ENCODE measurements at regions of chr3 and their contacts with region 1.

Region 1: DNA sequence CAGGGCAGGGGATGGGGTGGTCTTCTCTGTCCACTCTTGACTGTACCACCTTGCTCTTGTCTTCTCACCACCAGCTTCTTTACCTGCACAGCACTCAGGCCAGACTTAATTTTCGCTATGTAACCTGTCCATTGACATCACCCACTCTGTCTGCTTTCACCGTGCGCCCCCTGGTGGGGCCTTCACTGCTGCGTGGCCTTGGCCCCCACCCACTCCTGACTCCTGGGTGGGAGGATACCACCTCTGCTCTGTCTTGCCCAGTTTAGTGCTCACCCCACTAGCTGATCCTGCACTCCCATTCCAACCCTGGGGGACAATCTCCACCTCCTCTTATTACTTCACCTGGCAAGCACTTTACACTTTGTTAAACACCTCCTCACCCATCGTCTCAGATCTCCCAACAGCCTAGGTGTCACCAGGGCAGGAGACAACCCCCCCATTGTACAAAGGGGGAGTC is 17.7 kb downstream of the PTH1R start:
- DNase-seq: no peak
- H3K4me3 ChIP-seq: no peak overlapping the region
- CTCF ChIP-seq: peak; percentile 88

Region 2: DNA sequence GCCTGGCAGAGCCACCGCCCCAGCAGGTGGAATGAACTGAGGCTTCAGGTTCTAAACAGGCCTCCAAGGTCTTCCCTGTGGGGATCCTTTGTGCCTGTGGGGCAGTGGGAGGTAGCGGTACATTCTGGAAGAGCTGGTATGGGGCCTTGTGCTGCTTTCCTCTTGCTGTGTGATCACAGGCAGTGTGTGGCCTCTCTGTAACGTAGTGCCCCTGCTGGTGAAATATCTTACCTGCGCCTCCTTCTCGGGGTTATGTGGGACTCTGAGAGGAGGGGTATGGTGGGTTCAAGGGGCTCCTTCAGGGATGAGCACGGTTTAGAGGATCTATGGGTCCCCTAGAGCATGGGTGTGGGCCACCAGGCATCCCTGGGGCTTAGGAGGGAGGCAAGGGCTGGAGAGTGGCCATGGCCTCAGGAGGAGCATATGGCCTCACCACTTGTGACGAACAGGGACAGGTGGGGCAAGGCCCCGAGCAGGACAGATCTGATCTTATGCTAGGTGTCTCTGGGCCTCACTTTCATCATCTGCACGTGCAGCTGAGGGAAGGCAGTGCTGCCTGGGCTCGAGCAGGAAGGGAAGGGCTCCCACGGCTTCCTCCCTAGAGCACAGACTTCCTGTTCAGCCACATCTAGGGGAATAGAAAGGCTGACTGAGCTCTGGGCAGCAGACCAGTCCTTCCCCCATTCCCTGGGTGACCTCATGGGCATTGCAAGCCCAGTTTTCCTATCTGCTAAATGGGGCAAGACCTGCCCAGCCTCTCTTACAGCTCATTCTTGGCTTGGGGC is 199.9 kb before region 1 on chr3:
- CTCF ChIA-PET with region 1: interaction called, 59 read pairs
- POLR2A ChIA-PET with region 1: no interaction called
- DNase-seq: no peak
- H3K4me3 ChIP-seq: no peak overlapping the region
- CTCF ChIP-seq: no peak

Region 3: DNA sequence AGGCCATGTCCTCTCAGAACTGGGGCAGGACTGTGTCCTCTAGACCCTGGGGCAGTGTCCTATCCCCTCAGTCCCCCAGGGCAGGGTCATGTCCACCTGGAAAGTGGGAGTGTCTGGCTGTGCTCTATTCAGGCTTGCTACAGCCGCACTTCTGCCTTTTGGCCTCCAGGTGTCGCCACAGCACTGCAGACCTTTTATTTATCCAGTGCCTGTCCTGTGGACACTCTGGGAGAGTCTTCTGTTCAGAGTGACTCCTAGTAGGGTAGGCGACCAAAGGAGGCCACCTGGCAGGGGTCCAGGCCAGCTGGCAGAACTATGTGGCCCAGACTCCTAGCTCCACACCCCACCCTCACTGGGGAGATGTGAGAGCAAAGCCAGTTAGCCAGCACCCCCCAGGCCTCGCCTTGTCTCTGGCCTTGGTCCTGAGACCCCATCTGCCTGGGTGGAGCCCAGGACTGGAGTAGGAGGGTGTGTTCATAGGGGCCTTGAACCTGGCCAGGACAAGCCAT is 190.2 kb before region 1 on chr3:
- CTCF ChIA-PET with region 1: interaction called, 161 read pairs
- POLR2A ChIA-PET with region 1: no interaction called
- DNase-seq: no peak
- H3K4me3 ChIP-seq: no peak overlapping the region
- CTCF ChIP-seq: peak; percentile 93

Region 4: GRCh38 chr3:46717447-46718231 is 177.6 kb before region 1 on chr3 and contains the start of gene PRSS50:
- CTCF ChIA-PET with region 1: interaction called, 11 read pairs
- POLR2A ChIA-PET with region 1: no interaction called
- DNase-seq: no peak
- H3K4me3 ChIP-seq: no peak within 1 kb of the TSS
- CTCF ChIP-seq: peak; percentile 22

Region 5: DNA sequence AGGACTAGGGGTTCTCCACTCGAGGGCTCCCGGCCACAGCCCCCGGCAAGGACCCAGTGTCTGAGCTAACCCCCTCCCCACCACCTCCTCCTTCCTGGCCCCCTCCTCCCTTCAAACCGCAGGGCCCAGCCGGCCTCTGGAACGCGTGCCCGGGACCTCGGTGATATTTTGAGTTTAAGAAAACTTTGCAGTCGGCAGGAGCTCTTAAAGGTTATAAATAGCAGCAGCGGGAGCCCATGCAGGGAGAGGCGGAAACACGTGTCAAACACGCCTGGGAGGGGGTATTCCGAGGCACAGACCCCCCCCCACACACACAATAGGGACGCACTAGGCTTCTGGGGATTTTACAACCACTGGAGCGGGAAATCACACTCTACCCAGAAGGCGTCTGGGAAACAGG is 20.8 kb before region 1 on chr3:
- CTCF ChIA-PET with region 1: interaction called, 110 read pairs
- POLR2A ChIA-PET with region 1: no interaction called
- DNase-seq: no peak
- H3K4me3 ChIP-seq: no peak overlapping the region
- CTCF ChIP-seq: no peak

Region 6: GRCh38 chr3:46882377-46883053 is 12.7 kb before region 1 on chr3:
- CTCF ChIA-PET with region 1: interaction called, 28 read pairs
- POLR2A ChIA-PET with region 1: no interaction called
- DNase-seq: no peak
- H3K4me3 ChIP-seq: peak overlapping the region; percentile 59
- CTCF ChIP-seq: no peak